ENCODE measurements at regions of chrX and their contacts with region 1.

Region 1: DNA sequence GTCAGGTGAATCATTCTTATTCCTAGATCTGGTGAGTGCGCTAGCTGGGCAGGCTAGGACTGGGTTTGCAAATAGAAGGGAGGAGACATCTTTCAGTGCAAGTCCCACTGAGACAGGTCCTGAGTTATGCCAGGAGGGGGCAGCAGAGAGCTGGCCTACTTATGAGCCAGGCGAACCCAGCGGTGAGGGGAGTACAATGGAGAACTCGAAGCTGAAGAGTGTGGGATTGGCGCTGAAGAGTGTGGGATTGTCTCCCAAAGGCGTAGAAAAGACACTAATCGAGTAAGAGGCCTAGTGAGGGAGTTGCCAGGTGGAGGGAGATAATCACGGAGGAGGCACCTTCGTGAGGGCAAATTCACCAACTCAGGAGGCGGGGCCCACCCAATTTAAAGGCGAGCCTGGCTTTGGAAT is 91.7 kb upstream of the CXorf66 start:
- DNase-seq: no peak
- H3K4me3 ChIP-seq: no peak overlapping the region
- CTCF ChIP-seq: peak; percentile 79

Region 2: DNA sequence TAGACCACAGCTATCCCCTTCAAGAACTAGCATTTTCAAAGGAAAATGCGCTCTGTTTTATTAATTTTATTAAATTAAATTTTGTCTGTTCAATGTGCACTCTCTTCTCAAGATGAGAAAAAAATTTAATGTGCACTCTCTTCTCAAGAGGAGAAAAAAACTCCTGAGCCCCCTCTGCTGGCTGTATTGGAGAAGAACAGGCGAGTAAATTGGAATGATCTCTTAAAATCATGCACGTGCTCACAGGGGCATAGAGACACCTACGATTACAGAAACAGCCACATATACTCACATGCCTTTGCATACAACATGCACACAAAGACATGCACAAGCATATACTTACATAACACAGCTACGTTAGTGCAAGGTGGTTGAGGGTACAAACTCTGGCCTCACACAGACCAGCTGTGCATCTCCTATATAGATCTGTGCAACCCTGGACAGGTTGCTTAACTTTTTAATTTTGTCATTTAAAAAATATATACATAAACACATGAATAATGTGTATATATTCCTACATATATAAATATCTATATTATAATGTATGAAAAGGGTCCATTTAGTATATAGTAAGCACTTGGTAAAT is 84.5 kb after region 1 on chrX:
- CTCF ChIA-PET with region 1: interaction called, 14 read pairs
- POLR2A ChIA-PET with region 1: no interaction called
- DNase-seq: no peak
- H3K4me3 ChIP-seq: no peak overlapping the region
- CTCF ChIP-seq: peak; percentile 17

Measured in AG04449 (cell line).